Activated CD4-positive, alpha-beta T cell treated with anti-CD3 and anti-CD28 coated beads, Interleukin-2, amount 10 ng/mL, durations not matched to agents 7 days and 5 days (primary cell): ENCODE measurements at regions of chr1 and their contacts with region 1.

Region 1: GRCh38 chr1:118988186-118989005 is at the start of gene TBX15:
- DNase-seq: no peak
- H3K4me3 Mint-ChIP-seq: peak within 1 kb of the TSS; percentile 44
- H3K27ac Mint-ChIP-seq: peak within 1 kb of the TSS; percentile 57
- H3K4me1 Mint-ChIP-seq: peaks cover 11% of the 10 kb centered on the region
- H3K27me3 Mint-ChIP-seq: peaks cover 88% of the 10 kb centered on the region
- total RNA-seq, gene TBX15: not detected

Region 2: GRCh38 chr1:119008483-119009311 is 20.3 kb after region 1 on chr1:
- CTCF ChIA-PET with region 1: interaction called, 12 read pairs
- POLR2A ChIA-PET with region 1: no interaction called
- DNase-seq: peak; percentile 37
- H3K4me3 Mint-ChIP-seq: peak overlapping the region; percentile 15
- H3K27ac Mint-ChIP-seq: no peak overlapping the region
- H3K4me1 Mint-ChIP-seq: peaks cover 7% of the 10 kb centered on the region
- H3K27me3 Mint-ChIP-seq: peaks cover 62% of the 10 kb centered on the region